ENCODE measurements at regions of chr12 and their contacts with region 1.

Region 1: GRCh38 chr12:8681041-8681902 is 16.5 kb upstream of the RIMKLB start:
- DNase-seq: peak in 1 of 4 donors; percentile 58
- ATAC-seq: peak; percentile 88
- H3K4me3 ChIP-seq: peak overlapping the region in 1 of 2 donors; percentile 11
- H3K27ac ChIP-seq: peak overlapping the region; percentile 37 to 45
- H3K4me1 ChIP-seq: no peaks in the 10 kb centered on the region
- H3K27me3 ChIP-seq: no peaks in the 10 kb centered on the region
- CTCF ChIP-seq: no peak

Region 2: DNA sequence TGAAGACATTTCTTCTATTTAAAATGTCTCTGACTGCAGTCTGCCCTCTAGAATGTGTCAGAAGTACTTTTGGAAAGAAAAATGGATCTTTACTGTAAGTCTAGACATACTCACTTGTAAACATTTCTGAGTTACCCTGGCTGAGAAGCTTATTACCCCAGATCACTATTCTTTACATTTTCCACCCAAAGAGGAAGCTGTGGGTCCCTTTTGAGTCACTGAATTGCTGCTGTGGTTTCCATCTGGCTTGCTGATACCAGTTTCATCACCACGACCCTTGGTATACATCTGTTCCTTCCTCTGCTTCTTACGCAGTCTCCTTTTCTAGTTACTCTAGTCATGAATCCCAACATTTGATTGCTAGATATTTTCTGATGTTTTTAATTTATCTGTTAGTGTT is 188.2 kb before region 1 on chr12:
- intact Hi-C with region 1: no loop called
- DNase-seq: peak in 2 of 4 donors; percentile 7 to 51
- ATAC-seq: peak; percentile 79
- H3K4me3 ChIP-seq: no peak overlapping the region
- H3K27ac ChIP-seq: peak overlapping the region in 1 of 2 donors; percentile 85
- H3K4me1 ChIP-seq: peaks cover 0 to 27% of the 10 kb centered on the region in 2 donors
- H3K27me3 ChIP-seq: no peaks in the 10 kb centered on the region
- CTCF ChIP-seq: no peak

Region 3: DNA sequence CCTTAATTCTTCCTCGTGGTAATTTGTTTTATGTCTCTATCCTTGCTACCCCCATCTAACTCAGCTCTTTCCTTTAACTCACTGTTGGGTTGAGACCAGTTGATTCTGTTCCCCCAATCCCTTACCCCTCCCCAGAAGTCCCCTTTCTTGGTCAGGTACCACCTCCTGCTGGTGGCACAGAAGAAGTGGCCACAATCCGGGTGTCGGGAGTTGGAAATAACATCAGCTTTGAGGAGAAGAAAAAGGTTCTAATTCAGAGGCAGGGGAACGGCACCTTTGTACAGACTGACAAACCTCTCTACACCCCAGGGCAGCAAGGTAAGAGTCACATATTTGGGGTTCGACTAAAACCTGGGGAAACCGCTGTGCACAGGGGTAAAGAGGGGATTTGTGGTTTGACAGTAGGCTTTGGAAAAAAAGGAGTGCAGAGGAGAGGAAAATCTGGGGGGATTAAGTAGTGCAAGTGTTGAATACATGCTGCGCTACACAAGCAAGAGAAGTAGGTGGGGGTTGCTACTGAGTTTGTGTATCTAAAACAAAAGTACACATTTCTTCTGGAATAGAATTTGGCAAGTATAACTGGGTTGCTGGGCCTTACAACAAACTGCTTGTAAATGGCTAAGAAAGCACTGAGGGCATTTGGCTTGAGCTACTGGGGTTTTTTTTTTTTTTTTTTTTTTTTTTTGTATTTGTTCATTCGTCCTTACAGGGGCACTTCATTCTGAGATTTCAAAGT is 142.5 kb after region 1 on chr12:
- intact Hi-C with region 1: loop called in 1 of 2 experiments (anchors 5 kb)
- DNase-seq: peak in 2 of 4 donors; percentile 12 to 39
- ATAC-seq: peak; percentile 83
- H3K4me3 ChIP-seq: no peak overlapping the region
- H3K27ac ChIP-seq: no peak overlapping the region
- H3K4me1 ChIP-seq: no peaks in the 10 kb centered on the region
- H3K27me3 ChIP-seq: no peaks in the 10 kb centered on the region
- CTCF ChIP-seq: peak; percentile 39 to 40

Region 4: GRCh38 chr12:8870586-8870985 is 189.3 kb after region 1 on chr12:
- intact Hi-C with region 1: loop called in 1 of 2 experiments (anchors 10 kb)
- DNase-seq: no peak
- ATAC-seq: no peak
- H3K4me3 ChIP-seq: no peak overlapping the region
- H3K27ac ChIP-seq: no peak overlapping the region
- H3K4me1 ChIP-seq: no peaks in the 10 kb centered on the region
- H3K27me3 ChIP-seq: no peaks in the 10 kb centered on the region
- CTCF ChIP-seq: no peak

Region 5: DNA sequence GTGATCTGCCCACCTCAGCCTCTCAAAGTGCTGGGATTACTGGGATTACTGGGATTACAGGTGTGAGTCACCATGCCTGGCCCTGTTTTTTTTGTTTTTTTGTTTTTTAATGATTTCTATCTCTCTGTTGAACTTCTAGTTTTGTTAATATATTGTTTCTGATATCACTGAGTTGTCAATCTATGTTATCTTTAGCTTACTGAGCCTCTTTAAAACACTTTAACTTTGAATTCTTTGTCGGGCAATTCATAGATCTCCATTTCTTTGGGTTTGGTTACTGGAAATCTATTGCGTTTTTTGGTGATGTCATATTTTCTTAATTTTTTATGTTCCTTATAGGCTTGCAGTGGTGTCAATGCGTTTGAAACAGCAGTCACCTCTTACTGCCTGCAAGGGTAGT is 298.9 kb after region 1 on chr12:
- intact Hi-C with region 1: no loop called
- DNase-seq: no peak
- ATAC-seq: no peak
- H3K4me3 ChIP-seq: no peak overlapping the region
- H3K27ac ChIP-seq: no peak overlapping the region
- H3K4me1 ChIP-seq: no peaks in the 10 kb centered on the region
- H3K27me3 ChIP-seq: no peaks in the 10 kb centered on the region
- CTCF ChIP-seq: no peak

Region 6: DNA sequence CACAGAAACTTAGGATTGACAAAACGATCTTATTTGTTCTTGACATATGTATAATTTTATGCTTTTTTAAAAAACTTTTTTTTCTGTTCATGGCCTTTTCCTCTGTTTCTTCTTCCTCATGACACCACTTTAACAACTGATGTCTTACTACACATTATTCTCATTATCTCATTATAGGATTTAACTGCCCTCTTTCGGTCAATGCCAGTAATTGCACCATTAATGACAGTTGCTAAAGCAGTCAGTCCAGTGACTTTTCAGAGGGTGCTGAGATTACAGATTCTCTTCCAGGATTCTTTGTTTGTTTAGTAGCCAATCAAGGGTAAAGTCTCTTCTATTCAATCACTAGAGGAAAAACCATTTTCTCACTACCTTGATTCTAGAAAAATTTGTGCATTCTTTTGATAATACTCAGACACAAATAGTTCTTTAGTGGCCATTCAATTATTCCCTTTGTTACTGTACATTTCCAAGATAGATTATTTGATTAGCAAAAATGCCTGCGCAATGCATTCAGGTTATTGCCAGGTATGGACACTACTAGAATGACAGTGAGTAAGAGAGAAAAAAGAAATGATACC is 358.2 kb after region 1 on chr12:
- intact Hi-C with region 1: loop called in 1 of 2 experiments (anchors 10 kb)
- DNase-seq: peak in 2 of 4 donors; percentile 33 to 60
- ATAC-seq: peak; percentile 87
- H3K4me3 ChIP-seq: no peak overlapping the region
- H3K27ac ChIP-seq: no peak overlapping the region
- H3K4me1 ChIP-seq: no peaks in the 10 kb centered on the region
- H3K27me3 ChIP-seq: no peaks in the 10 kb centered on the region
- CTCF ChIP-seq: peak; percentile 75 to 77